Heart left ventricle (tissue), 16 donors: ENCODE measurements at regions of chr16 and their contacts with region 1.

Region 1: GRCh38 chr16:55668340-55669281 is 12.8 kb downstream of the SLC6A2 start:
- DNase-seq: no peak
- ATAC-seq: peak in 1 of 4 donors; percentile 19
- H3K4me3 ChIP-seq: no peak overlapping the region
- H3K27ac ChIP-seq: no peak overlapping the region
- H3K4me1 ChIP-seq: peaks cover 0 to 5% (median 0%) of the 10 kb centered on the region in 12 donors
- H3K27me3 ChIP-seq: no peaks in the 10 kb centered on the region
- CTCF ChIP-seq: no peak
- POLR2A ChIP-seq: no peak

Region 2: DNA sequence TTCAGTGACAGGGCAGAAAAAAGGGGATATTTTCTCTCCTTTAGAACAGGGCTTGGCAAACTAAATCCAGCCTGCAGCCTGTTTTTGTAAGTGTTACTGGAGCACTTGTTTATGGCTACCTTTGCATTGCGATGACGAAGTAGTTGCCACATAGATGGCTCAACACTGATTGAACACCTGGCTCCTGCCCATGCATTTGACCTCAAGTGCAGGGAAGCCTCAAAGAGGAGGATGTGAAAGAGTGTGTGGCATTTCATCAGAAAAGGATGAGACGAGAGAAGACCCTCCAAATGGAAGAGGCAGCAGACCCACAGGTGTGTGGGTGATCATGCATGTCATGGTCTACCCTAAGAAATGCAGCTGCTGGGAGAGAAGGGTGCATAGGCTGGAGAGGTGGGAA is 770.7 kb before region 1 on chr16:
- intact Hi-C with region 1: no loop called
- DNase-seq: no peak
- ATAC-seq: no peak
- H3K4me3 ChIP-seq: no peak overlapping the region
- H3K27ac ChIP-seq: no peak overlapping the region
- H3K4me1 ChIP-seq: peaks cover 0 to 7% (median 0%) of the 10 kb centered on the region in 12 donors
- H3K27me3 ChIP-seq: no peaks in the 10 kb centered on the region
- CTCF ChIP-seq: no peak
- POLR2A ChIP-seq: no peak

Region 3: DNA sequence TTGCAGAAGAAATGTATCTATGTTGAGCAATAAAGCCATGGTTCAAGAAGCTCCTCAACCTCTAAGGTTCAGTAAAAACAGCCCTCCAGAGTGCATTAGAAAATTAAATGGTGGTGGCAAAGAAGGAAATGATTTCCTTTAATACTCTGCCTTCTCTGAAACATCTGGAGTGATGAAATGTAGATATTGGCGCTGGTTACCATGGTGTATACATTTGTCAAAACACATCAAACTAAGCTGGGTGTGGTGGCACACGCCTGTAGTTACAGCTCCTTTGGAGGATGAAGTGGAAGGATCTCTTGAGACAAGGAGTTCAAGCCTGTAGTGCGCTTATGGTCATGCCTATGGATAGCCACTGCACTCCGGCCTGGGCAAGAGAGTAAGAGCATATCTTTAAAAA is 96.2 kb before region 1 on chr16:
- intact Hi-C with region 1: loop called in 1 of 10 experiments (anchors 10 kb)
- DNase-seq: no peak
- ATAC-seq: no peak
- H3K4me3 ChIP-seq: no peak overlapping the region
- H3K27ac ChIP-seq: no peak overlapping the region
- H3K4me1 ChIP-seq: peaks cover 0 to 53% (median 15%) of the 10 kb centered on the region in 12 donors
- H3K27me3 ChIP-seq: no peaks in the 10 kb centered on the region
- CTCF ChIP-seq: no peak
- POLR2A ChIP-seq: no peak

Region 4: GRCh38 chr16:55717326-55717725 is 48.7 kb after region 1 on chr16:
- intact Hi-C with region 1: no loop called
- DNase-seq: no peak
- ATAC-seq: no peak
- H3K4me3 ChIP-seq: no peak overlapping the region
- H3K27ac ChIP-seq: no peak overlapping the region
- H3K4me1 ChIP-seq: no peaks in the 10 kb centered on the region
- H3K27me3 ChIP-seq: peaks cover 0 to 44% (median 0%) of the 10 kb centered on the region in 9 donors
- CTCF ChIP-seq: no peak
- POLR2A ChIP-seq: no peak